Heart right ventricle (tissue), 16 donors: ENCODE measurements at regions of chr7 and their contacts with region 1.

Region 1: DNA sequence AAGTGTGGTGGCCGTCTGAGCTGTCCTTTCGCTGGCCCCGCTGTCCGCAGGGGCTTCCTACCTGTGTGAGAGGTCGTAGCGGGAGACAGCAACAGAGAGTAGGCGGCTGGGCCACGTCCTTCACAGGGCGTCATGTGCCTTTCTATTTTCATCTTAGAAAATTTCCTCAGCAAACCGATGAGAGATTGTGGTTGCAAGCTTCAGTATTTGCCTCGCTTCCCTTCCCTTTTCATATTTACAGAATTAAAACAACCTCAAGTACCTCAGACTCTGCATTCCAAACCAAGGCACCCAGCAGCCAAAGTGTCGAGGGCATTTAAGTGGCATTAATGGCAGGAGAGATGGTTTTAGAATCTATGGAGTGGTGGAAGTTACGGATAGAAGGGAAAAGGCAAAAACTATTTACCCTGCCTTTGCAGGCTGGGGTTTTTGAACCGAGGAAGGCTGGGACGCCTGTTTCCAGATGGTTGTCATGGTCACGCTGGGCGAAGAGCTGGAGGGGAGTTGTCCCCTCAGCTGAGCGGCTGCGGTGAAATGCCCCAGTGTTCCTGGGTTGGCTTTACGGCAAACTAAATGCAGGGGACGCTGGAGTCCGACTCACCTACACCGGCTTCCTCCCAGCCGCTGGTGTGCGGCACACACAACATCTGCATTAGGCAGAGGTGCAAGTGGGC is 41.9 kb downstream of the WIPI2 start:
- DNase-seq: no peak
- ATAC-seq: peak in 7 of 8 donors; percentile 36 to 56 (median 54)
- H3K4me3 ChIP-seq: no peak overlapping the region
- H3K27ac ChIP-seq: peak overlapping the region in 7 of 10 donors; percentile 13 to 66 (median 52)
- H3K4me1 ChIP-seq: peaks cover 0 to 43% (median 6%) of the 10 kb centered on the region in 9 donors
- H3K27me3 ChIP-seq: no peaks in the 10 kb centered on the region
- CTCF ChIP-seq: no peak

Region 2: GRCh38 chr7:5333121-5334045 is 101.4 kb after region 1 on chr7:
- intact Hi-C with region 1: loop called in 1 of 10 experiments (anchors 10 kb)
- DNase-seq: no peak
- ATAC-seq: peak in 1 of 8 donors; percentile 45
- H3K4me3 ChIP-seq: no peak overlapping the region
- H3K27ac ChIP-seq: no peak overlapping the region
- H3K4me1 ChIP-seq: peaks cover 0 to 12% (median 0%) of the 10 kb centered on the region in 9 donors
- H3K27me3 ChIP-seq: no peaks in the 10 kb centered on the region
- CTCF ChIP-seq: no peak